ENCODE measurements at regions of chr10 and their contacts with region 1.

Region 1: DNA sequence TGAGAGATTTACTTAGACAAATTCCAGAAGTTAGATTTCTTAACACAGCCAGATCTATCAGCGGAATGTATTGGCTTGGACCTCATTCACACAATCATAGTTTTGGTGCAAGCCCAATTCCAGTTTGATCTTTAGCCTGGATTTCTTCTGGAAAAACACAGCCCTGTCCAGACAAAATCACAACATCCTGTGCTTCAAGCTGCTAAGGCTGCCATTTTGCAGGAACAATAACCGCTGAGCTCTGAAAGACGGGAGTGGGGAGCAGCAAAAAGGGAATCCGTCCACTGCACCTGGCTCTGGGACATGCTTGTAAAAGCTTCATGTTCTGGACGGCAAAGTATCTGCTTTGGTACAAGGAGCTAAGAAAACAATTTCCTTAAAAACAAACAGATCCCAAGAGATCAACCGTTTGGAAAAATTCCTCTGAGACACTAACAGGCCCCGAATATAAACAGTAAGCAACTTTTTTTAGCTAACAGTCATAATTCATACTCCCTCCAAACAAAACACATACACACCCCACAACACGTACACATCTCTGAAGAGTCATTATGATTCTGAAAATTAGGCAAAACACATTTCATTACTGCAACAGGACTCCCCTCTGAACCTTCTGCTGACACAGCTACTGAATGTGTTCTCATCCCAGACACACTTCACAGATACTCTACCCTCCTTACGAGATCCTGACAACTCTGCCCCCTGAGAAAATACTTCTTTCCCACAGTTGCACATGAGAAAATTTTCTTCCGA is 32.4 kb downstream of the ITIH5 start:
- DNase-seq: no peak
- ATAC-seq: no peak
- H3K4me3 ChIP-seq: no peak overlapping the region
- H3K27ac ChIP-seq: no peak overlapping the region
- H3K4me1 ChIP-seq: no peaks in the 10 kb centered on the region
- H3K27me3 ChIP-seq: no peaks in the 10 kb centered on the region
- CTCF ChIP-seq: no peak
- POLR2A ChIP-seq: no peak
- RAD21 ChIP-seq: no peak

Region 2: DNA sequence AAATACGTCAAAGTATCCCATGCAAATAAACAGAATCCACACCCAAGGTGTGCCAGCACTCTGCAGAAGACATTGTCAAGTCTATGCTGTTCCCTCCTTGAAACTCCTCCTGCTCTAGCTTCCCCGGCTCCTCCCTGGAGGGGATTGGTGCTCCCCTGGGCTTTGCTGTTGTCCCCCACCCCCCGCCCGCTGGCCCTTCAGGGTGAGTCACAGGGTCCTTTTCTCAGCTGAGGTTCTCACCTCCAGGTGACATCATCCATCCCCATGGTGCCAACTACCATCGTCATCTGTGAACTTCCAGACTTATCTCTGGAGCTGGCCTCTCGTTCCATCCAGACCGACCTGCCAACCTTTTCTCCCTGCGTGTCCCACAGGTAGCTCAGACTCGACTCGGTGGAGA is 44.6 kb before region 1 on chr10:
- CTCF ChIA-PET with region 1: interaction called, 11 read pairs
- POLR2A ChIA-PET with region 1: no interaction called
- dilution Hi-C with region 1: no loop called
- in situ Hi-C with region 1: no loop called
- intact Hi-C with region 1: no loop called
- DNase-seq: no peak
- ATAC-seq: no peak
- H3K4me3 ChIP-seq: no peak overlapping the region
- H3K27ac ChIP-seq: no peak overlapping the region
- H3K4me1 ChIP-seq: no peaks in the 10 kb centered on the region
- H3K27me3 ChIP-seq: peaks cover 4% of the 10 kb centered on the region; the same call in 1 of the 2 replicates
- CTCF ChIP-seq: no peak
- POLR2A ChIP-seq: no peak
- RAD21 ChIP-seq: no peak

Region 3: DNA sequence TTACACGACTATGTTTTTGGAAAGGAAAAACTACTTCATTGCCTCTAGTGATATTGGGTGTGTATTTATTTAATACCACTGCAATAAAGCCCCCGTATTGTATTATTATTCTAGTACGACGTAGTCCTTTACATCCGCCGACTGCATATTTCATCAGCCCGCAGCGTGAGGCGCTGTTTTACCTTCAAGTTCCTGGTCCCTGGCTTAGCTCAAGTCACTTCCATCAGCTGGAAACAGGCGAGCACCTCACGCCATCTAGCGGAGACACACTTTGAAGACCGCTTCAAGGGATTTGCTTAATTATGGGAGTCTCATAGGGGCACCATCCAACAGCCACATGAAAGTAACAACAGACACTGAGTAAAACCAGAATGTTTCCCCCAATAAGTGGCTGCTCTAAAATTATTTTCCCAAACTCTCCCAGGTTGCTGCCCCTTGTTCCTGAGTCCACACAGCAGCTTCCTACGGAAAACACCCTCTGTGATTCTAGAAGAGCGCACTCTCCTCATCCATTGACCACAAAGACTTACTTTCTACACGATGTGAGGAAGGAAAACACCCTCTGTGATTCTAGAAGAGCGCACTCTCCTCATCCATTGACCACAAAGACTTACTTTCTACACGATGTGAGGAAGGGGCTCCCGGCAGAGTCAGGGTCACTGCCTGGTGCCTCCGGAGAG is 53.0 kb after region 1 on chr10:
- CTCF ChIA-PET with region 1: no interaction called
- POLR2A ChIA-PET with region 1: no interaction called
- dilution Hi-C with region 1: no loop called
- in situ Hi-C with region 1: no loop called
- intact Hi-C with region 1: no loop called
- DNase-seq: peak; percentile 85
- ATAC-seq: peak; percentile 96
- H3K4me3 ChIP-seq: no peak overlapping the region
- H3K27ac ChIP-seq: no peak overlapping the region
- H3K4me1 ChIP-seq: no peaks in the 10 kb centered on the region
- H3K27me3 ChIP-seq: no peaks in the 10 kb centered on the region; the same call in 1 of the 2 replicates
- CTCF ChIP-seq: peak; percentile 85
- POLR2A ChIP-seq: no peak
- RAD21 ChIP-seq: peak; percentile 70

Region 4: DNA sequence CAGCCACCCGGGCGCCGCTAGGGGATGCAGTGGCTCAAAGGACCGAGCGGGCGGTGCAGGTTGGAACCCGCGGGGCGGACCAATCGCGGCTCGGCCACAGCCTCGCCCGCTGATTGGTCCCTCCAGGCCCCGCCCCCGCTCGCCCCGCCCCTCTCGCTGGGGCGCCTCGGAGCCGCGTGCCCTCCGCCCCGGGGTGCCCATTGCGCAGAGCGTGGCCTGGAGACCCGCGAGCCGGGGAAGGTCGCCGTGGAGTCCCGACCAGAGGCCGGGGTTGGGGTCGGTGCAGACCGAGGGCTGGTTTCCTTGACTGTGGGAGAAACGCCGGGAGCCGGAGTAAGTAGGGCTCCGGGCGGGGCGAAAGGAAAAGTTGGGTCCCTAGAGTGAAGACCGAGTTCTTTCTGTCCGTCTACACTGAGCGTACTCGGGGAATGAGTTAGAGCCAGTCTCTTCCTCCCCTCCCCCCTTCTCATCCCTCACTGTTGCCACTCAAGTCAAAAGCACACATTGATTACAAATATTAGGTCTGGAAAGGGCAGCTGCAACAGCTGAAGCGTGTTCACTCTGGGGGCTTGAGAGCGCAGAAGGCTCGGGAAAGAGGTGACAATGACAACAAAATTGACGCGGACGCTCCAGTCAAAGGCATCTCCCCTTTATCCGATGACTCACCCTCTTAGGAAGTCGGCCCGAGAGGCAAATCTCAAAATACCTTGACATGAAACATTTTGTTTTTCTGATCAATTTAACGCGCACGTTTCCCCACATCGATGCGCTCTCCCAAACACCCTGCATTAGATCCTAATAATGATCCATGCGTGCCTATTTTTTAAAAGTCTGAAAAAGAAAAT is 419.4 kb after region 1 on chr10:
- CTCF ChIA-PET with region 1: no interaction called
- POLR2A ChIA-PET with region 1: no interaction called
- dilution Hi-C with region 1: no loop called
- in situ Hi-C with region 1: no loop called
- intact Hi-C with region 1: no loop called
- DNase-seq: peak; percentile 70
- ATAC-seq: peak; percentile 94
- H3K4me3 ChIP-seq: peak overlapping the region; percentile 52
- H3K27ac ChIP-seq: no peak overlapping the region
- H3K4me1 ChIP-seq: no peaks in the 10 kb centered on the region; the same call in 1 of the 2 replicates
- H3K27me3 ChIP-seq: peaks cover 84% of the 10 kb centered on the region
- CTCF ChIP-seq: peak; percentile 79
- POLR2A ChIP-seq: no peak
- RAD21 ChIP-seq: peak; percentile 74

Measured in IMR-90 (cell line).